ENCODE measurements at regions of chr1 and their contacts with region 1.

Region 1: GRCh38 chr1:3564921-3565827 is 46.1 kb downstream of the MEGF6 start:
- DNase-seq: peak in 1 of 3 donors; percentile 78
- ATAC-seq: peak in 1 of 2 donors; percentile 38
- H3K4me3 ChIP-seq: no peak overlapping the region
- H3K27ac ChIP-seq: no peak overlapping the region
- H3K4me1 ChIP-seq: no peaks in the 10 kb centered on the region
- H3K27me3 ChIP-seq: no peaks in the 10 kb centered on the region

Region 2: GRCh38 chr1:3618881-3619671 is 53.9 kb after region 1 on chr1:
- intact Hi-C with region 1: loop called (anchors 2 to 5 kb)
- DNase-seq: peak in 2 of 3 donors; percentile 65 to 85
- ATAC-seq: peak; percentile 71 to 75
- H3K4me3 ChIP-seq: no peak overlapping the region
- H3K27ac ChIP-seq: no peak overlapping the region
- H3K4me1 ChIP-seq: peaks cover 5% of the 10 kb centered on the region
- H3K27me3 ChIP-seq: no peaks in the 10 kb centered on the region

Region 3: GRCh38 chr1:3727042-3727824 is 162.1 kb after region 1 on chr1:
- intact Hi-C with region 1: loop called in 2 of 4 experiments (anchors 10 kb)
- DNase-seq: no peak
- ATAC-seq: peak in 1 of 2 donors; percentile 6
- H3K4me3 ChIP-seq: no peak overlapping the region
- H3K27ac ChIP-seq: no peak overlapping the region
- H3K4me1 ChIP-seq: no peaks in the 10 kb centered on the region
- H3K27me3 ChIP-seq: no peaks in the 10 kb centered on the region

Region 4: DNA sequence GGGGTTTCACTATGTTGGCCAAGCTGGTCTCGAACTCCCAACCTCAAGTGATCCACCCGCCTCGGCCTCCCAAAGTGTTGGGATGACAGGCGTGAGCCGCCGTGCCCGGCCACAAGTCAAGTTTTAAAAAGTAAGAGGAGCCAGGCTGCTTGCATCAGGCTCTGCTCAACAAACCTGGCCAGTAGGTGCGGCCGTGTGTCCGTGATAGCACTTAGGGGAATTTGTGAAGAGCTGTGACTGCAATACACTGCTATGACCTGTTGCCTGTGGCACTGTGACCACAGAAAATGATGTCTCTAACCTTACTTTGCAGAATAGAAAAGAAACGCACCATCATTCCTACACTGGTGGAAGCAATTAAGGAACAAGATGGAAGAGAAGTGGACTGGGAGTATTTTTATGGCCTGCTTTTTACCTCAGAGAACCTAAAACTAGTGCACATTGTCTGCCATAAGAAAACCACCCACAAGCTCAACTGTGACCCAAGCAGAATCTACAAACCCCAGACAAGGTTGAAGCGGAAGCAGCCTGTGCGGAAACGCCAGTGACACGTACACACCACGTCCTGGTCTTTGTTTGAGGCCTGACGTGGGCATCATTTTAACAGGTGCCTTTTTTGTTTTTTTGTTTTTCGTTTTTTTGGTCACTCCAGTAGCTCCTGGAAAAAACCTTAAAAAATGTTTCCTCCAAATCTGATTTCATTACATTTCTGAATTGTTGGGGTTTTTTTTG is 318.2 kb after region 1 on chr1:
- intact Hi-C with region 1: no loop called
- DNase-seq: no peak
- ATAC-seq: no peak
- H3K4me3 ChIP-seq: no peak overlapping the region
- H3K27ac ChIP-seq: no peak overlapping the region
- H3K4me1 ChIP-seq: no peaks in the 10 kb centered on the region
- H3K27me3 ChIP-seq: no peaks in the 10 kb centered on the region

Measured in right cardiac atrium (tissue), 5 donors.